Calu3 (cell line): ENCODE measurements at regions of chr2 and their contacts with region 1.

Region 1: DNA sequence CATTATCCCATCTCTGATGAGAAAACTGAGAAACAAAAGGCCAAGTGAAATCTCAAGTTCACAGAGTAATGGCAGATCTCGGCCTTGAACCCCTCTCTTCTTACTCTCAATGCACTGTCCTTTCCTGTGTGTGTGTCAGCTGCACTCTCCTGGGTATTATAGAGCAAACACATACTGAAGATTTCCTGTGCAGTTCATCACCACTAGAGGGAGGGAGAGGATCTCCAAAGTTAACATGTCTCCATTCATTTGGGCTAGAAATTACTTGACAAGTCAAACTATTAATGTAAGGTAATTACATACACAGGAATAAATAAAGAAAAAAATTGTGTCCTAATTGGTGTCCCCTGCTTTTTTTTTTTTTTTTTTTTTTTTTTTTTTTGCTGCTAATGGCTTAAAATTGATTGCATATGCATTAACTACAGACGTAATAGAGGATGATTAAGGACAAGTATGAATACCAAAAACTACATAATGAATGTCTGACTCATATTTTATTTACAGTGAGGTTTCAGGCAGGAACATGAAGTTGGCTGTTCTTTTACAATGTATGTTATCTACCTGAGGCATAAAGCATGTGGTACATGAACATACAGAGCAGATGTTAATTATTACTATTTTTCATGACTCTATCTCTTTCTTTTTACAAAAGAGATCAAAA is 269.2 kb downstream of the NYAP2 start:
- DNase-seq: peak; percentile 45
- H3K4me3 Mint-ChIP-seq: no peak overlapping the region
- H3K27ac Mint-ChIP-seq: no peak overlapping the region
- H3K4me1 Mint-ChIP-seq: no peaks in the 10 kb centered on the region
- H3K27me3 Mint-ChIP-seq: no peaks in the 10 kb centered on the region
- CTCF ChIP-seq: peak; percentile 65

Region 2: GRCh38 chr2:225241139-225241538 is 427.6 kb before region 1 on chr2:
- CTCF ChIA-PET with region 1: interaction called, 14 read pairs
- intact Hi-C with region 1: no loop called
- DNase-seq: no peak
- H3K4me3 Mint-ChIP-seq: no peak overlapping the region
- H3K27ac Mint-ChIP-seq: no peak overlapping the region
- H3K4me1 Mint-ChIP-seq: no peaks in the 10 kb centered on the region
- H3K27me3 Mint-ChIP-seq: no peaks in the 10 kb centered on the region
- CTCF ChIP-seq: no peak

Region 3: DNA sequence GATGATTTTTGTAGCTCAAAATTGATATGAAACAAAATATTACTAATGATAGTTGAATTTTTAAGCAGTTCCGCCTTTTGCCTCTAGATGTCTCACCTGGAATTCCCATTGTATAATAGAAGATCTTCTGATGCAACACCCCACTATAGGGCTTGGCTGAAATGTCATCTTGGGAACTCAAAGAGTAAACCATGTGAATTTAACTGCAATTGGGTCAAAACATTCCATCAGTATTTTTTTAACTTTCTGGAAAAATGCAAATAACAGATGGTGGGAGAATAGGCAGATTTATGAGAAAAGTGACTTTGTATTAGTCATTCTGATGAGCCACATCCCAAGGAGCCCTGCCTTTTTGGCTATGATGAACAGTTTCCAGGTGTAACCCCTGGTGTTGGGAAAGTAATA is 220.7 kb after region 1 on chr2:
- CTCF ChIA-PET with region 1: no interaction called
- intact Hi-C with region 1: loop called (anchors 5 kb)
- DNase-seq: peak; percentile 33
- H3K4me3 Mint-ChIP-seq: no peak overlapping the region
- H3K27ac Mint-ChIP-seq: no peak overlapping the region
- H3K4me1 Mint-ChIP-seq: peaks cover 5% of the 10 kb centered on the region
- H3K27me3 Mint-ChIP-seq: no peaks in the 10 kb centered on the region
- CTCF ChIP-seq: peak; percentile 78

Region 4: DNA sequence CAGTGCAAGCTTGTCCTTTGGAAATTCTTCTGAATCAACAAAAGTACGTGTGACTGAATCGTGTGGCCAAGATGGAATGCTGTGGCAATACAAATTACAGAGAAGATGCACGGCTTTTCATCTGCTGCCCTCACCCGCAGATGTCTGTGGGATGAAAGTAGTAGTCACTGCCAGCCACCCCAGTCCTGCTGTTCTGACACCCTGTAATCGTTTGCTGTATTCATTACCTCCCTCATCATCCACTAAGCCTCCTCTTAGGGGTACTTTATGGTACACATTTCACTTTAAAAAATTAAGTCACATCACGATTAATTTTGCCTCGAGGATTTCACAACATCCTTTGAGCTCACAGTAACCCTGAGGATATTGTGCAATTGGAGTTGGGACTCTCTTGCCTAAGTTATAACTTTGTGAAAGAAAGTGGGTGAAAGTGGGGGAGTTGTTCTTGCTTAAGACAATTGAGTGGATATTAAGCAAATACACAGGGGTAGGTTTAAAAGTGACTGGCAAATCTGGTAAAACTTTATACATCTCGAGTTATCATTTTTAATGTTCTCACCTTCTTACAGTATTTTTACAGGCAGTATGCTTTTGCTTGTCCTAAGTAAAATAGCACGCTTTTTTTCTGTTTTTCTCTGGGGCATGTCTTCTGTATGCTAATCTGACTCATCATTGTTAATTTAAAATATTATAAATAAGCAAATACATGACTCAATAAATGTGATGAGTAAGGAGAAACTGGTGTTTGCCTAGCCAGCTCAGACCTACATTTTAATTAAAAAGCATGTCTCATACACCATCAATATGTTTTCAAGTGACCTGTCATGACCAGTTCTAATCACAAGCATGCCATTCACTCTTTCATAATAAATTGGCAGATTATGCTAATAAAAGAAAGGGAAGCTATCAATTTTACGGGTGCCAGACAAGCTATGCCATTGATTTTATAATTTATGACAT is 450.0 kb after region 1 on chr2:
- CTCF ChIA-PET with region 1: no interaction called
- intact Hi-C with region 1: loop called (anchors 2 kb)
- DNase-seq: peak; percentile 10
- H3K4me3 Mint-ChIP-seq: peak overlapping the region; percentile 25
- H3K27ac Mint-ChIP-seq: peak overlapping the region; percentile 67
- H3K4me1 Mint-ChIP-seq: peaks cover 43% of the 10 kb centered on the region
- H3K27me3 Mint-ChIP-seq: no peaks in the 10 kb centered on the region
- CTCF ChIP-seq: no peak

Region 5: GRCh38 chr2:226984750-226985582 is 1316.2 kb after region 1 on chr2:
- CTCF ChIA-PET with region 1: interaction called, 13 read pairs
- intact Hi-C with region 1: loop called (anchors 1 kb)
- DNase-seq: peak; percentile 40
- H3K4me3 Mint-ChIP-seq: no peak overlapping the region
- H3K27ac Mint-ChIP-seq: no peak overlapping the region
- H3K4me1 Mint-ChIP-seq: no peaks in the 10 kb centered on the region
- H3K27me3 Mint-ChIP-seq: no peaks in the 10 kb centered on the region
- CTCF ChIP-seq: peak; percentile 53